Right cardiac atrium (tissue), 5 donors: ENCODE measurements at regions of chr21 and their contacts with region 1.

Region 1: GRCh38 chr21:33655591-33656221 is 13.4 kb downstream of the ITSN1 start:
- DNase-seq: no peak
- ATAC-seq: peak; percentile 13 to 70
- H3K4me3 ChIP-seq: no peak overlapping the region
- H3K27ac ChIP-seq: no peak overlapping the region
- H3K4me1 ChIP-seq: peaks cover 20% of the 10 kb centered on the region
- H3K27me3 ChIP-seq: no peaks in the 10 kb centered on the region

Region 2: GRCh38 chr21:33703750-33704606 is 48.3 kb after region 1 on chr21:
- intact Hi-C with region 1: loop called in 1 of 4 experiments (anchors 10 kb)
- DNase-seq: peak in 1 of 3 donors; percentile 54
- ATAC-seq: peak; percentile 68 to 78
- H3K4me3 ChIP-seq: peak overlapping the region; percentile 23
- H3K27ac ChIP-seq: peak overlapping the region; percentile 51
- H3K4me1 ChIP-seq: peaks cover 4% of the 10 kb centered on the region
- H3K27me3 ChIP-seq: no peaks in the 10 kb centered on the region

Region 3: GRCh38 chr21:33751120-33751519 is 95.4 kb after region 1 on chr21:
- intact Hi-C with region 1: loop called in 1 of 4 experiments (anchors 10 kb)
- DNase-seq: no peak
- ATAC-seq: peak; percentile 46 to 51
- H3K4me3 ChIP-seq: no peak overlapping the region
- H3K27ac ChIP-seq: no peak overlapping the region
- H3K4me1 ChIP-seq: peaks cover 3% of the 10 kb centered on the region
- H3K27me3 ChIP-seq: no peaks in the 10 kb centered on the region